ENCODE measurements at regions of chr19 and their contacts with region 1.

Region 1: DNA sequence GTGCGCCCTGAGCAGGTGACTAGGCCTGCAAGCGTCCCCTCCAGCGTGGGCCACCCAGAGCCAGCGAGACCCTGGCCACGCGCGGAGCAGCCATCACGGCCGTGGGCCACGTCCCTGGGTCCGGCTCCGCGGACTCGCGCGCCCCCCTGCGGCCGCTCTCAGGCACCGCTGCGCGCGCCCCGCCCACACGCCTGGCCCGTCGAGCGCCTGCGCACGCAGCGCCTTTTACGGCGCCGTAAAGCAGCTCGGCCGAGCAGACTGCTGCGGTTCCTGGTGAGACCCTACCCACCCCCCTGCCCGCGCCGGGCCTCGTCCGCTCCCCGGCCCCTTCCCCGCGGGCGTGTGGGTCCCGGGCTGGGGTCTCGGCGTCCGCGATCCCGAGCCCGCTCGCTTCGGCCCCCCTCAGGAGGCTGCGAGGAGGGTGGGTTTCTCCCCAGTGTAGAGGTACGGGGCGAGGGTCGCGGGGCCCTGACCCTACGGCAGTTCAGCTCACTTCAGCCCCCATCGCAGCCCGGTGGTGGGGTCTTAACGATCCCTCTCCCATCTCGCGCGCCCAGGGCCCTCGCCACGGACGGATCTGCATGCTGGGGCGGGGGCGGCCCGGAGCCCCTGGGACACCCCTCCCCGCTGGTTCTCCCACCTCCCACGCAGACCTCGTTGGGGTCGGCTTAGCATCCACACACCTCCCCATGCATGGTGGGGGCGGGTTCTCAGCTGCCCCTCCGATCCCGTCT is at the start of gene TRAPPC5:
- DNase-seq: peak; percentile 76
- ATAC-seq: peak; percentile 93
- H3K4me3 ChIP-seq: peak within 1 kb of the TSS; percentile 87
- H3K27ac ChIP-seq: peak within 1 kb of the TSS; percentile 86
- H3K4me1 ChIP-seq: peaks cover 4% of the 10 kb centered on the region; the same call in 1 of the 2 replicates
- H3K27me3 ChIP-seq: peaks cover 8% of the 10 kb centered on the region
- CTCF ChIP-seq: peak; percentile 97
- POLR2A ChIP-seq: no peak
- RAD21 ChIP-seq: peak; percentile 83
- total RNA-seq, gene TRAPPC5: 54.7 and 73.0 TPM in 2 replicates

Region 2: GRCh38 chr19:7562646-7563393 is 118.0 kb before region 1 on chr19:
- CTCF ChIA-PET with region 1: no interaction called
- POLR2A ChIA-PET with region 1: interaction called, 4 read pairs
- dilution Hi-C with region 1: no loop called
- in situ Hi-C with region 1: no loop called
- intact Hi-C with region 1: loop called (anchors 1 kb)
- DNase-seq: no peak
- ATAC-seq: peak; percentile 48; the same call in 1 of the 2 replicates
- H3K4me3 ChIP-seq: no peak overlapping the region
- H3K27ac ChIP-seq: no peak overlapping the region
- H3K4me1 ChIP-seq: no peaks in the 10 kb centered on the region
- H3K27me3 ChIP-seq: no peaks in the 10 kb centered on the region
- CTCF ChIP-seq: no peak
- POLR2A ChIP-seq: no peak
- RAD21 ChIP-seq: no peak

Region 3: GRCh38 chr19:7629347-7630054 is 51.3 kb before region 1 on chr19 and contains the starts of genes PET100 and XAB2:
- CTCF ChIA-PET with region 1: interaction called, 6 read pairs
- POLR2A ChIA-PET with region 1: no interaction called
- dilution Hi-C with region 1: no loop called
- in situ Hi-C with region 1: no loop called
- intact Hi-C with region 1: loop called (anchors 2 kb)
- DNase-seq: peak; percentile 99
- ATAC-seq: peak; percentile 97
- H3K4me3 ChIP-seq: peak within 1 kb of the TSS; percentile 70
- H3K27ac ChIP-seq: peak within 1 kb of the TSS; percentile 47
- H3K4me1 ChIP-seq: peaks cover 8% of the 10 kb centered on the region; the same call in 1 of the 2 replicates
- H3K27me3 ChIP-seq: no peaks in the 10 kb centered on the region
- CTCF ChIP-seq: no peak
- POLR2A ChIP-seq: peak; percentile 89
- RAD21 ChIP-seq: no peak
- total RNA-seq, gene PET100: 1.4 and 5.3 TPM in 2 replicates
- total RNA-seq, gene XAB2: 28.1 and 29.9 TPM in 2 replicates

Region 4: GRCh38 chr19:7652061-7652641 is 28.6 kb before region 1 on chr19:
- CTCF ChIA-PET with region 1: interaction called, 4 read pairs
- POLR2A ChIA-PET with region 1: no interaction called
- dilution Hi-C with region 1: no loop called
- in situ Hi-C with region 1: no loop called
- intact Hi-C with region 1: loop called (anchors 1 kb)
- DNase-seq: peak; percentile 60
- ATAC-seq: peak; percentile 90
- H3K4me3 ChIP-seq: peak overlapping the region; percentile 8; the same call in 1 of the 2 replicates
- H3K27ac ChIP-seq: no peak overlapping the region
- H3K4me1 ChIP-seq: no peaks in the 10 kb centered on the region
- H3K27me3 ChIP-seq: peaks cover 6% of the 10 kb centered on the region; the same call in 1 of the 2 replicates
- CTCF ChIP-seq: peak; percentile 97
- POLR2A ChIP-seq: no peak
- RAD21 ChIP-seq: peak; percentile 62

Measured in IMR-90 (cell line).